Activated naive CD4-positive, alpha-beta T cell treated with anti-CD3 and anti-CD28 coated beads for 36 hours (primary cell): ENCODE measurements at regions of chr15 and their contacts with region 1.

Region 1: GRCh38 chr15:56052395-56053045 is 59.1 kb upstream of the NEDD4 start:
- DNase-seq: peak; percentile 21
- H3K4me3 Mint-ChIP-seq: no peak overlapping the region
- H3K27ac Mint-ChIP-seq: no peak overlapping the region
- H3K4me1 Mint-ChIP-seq: peaks cover 2% of the 10 kb centered on the region
- H3K27me3 Mint-ChIP-seq: no peaks in the 10 kb centered on the region

Region 2: DNA sequence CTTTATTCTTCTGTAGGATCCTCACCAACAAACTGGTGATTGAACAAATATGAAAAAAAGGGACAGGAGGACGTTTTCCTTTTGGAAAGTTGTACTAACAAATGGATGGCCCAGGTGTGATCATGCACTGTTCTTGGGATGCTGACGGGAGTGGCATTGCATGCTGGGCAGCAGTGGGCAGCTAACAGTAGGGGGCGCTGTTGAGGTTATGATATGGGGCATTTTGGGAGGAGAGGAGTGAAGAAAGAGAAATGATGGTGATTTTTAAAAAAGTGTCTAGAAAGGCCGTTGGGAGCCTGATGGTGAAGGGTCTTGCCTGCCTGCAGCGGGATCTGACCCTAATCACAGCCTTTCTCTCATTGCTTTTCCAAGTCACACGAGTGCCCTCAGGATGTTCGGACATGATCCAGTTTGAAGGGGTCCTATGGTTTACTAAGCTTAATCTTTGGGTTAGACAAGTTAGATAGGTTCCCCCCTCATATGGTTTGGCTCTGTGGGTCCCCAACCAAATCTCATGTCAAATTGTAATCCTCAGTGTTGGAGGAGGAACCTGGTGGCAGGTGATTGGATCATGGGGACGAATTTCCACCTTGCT is 263.4 kb before region 1 on chr15:
- CTCF ChIA-PET with region 1: no interaction called
- intact Hi-C with region 1: loop called (anchors 1 kb)
- DNase-seq: peak; percentile 74
- H3K4me3 Mint-ChIP-seq: no peak overlapping the region
- H3K27ac Mint-ChIP-seq: no peak overlapping the region
- H3K4me1 Mint-ChIP-seq: no peaks in the 10 kb centered on the region
- H3K27me3 Mint-ChIP-seq: peaks cover 9% of the 10 kb centered on the region